ENCODE measurements at regions of chr4 and their contacts with region 1.

Region 1: GRCh38 chr4:71009890-71010588 is 16.6 kb downstream of the DCK start:
- DNase-seq: peak; percentile 66
- ATAC-seq: peak; percentile 67
- H3K4me3 ChIP-seq: no peak overlapping the region
- H3K27ac ChIP-seq: no peak overlapping the region
- H3K4me1 ChIP-seq: 0 out of 2 replicates have a peak, but pooled peaks cover 5% of the 10 kb centered on the region
- H3K27me3 ChIP-seq: no peaks in the 10 kb centered on the region
- CTCF ChIP-seq: peak; percentile 94

Region 2: DNA sequence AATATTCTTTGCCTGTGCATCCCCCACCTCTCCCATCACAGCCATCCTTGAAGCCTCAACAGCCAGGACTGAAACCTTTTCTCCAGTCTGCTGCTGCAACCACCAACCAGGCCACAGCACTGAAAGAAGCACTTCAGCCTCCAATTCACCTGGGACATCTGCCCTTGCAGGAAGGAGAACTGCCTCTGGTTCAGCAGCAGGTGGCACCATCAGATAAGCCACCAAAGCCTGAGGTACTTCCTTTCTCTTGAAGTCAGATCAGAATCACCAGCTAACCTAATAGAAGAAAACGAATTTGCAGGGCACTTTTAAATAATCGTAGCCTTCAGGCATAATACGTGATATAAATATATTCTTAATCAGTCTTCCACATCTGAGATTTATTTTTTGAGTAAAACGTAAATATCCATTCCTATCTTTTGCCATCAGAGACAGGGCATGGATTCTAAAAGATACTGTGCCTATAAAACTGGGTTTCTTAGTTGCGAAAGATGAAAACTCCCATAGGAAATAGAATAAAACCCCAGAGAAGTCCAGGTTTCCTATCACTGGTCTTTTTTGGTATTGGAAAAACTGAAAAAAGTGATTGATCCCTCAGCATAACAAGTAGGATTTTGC is 408.5 kb before region 1 on chr4:
- CTCF ChIA-PET with region 1: interaction called, 3 read pairs
- POLR2A ChIA-PET with region 1: no interaction called
- intact Hi-C with region 1: loop called (anchors 1 kb)
- DNase-seq: peak; percentile 83
- ATAC-seq: peak; percentile 98
- H3K4me3 ChIP-seq: no peak overlapping the region
- H3K27ac ChIP-seq: no peak overlapping the region
- H3K4me1 ChIP-seq: no peaks in the 10 kb centered on the region
- H3K27me3 ChIP-seq: no peaks in the 10 kb centered on the region
- CTCF ChIP-seq: peak; percentile 93

Region 3: DNA sequence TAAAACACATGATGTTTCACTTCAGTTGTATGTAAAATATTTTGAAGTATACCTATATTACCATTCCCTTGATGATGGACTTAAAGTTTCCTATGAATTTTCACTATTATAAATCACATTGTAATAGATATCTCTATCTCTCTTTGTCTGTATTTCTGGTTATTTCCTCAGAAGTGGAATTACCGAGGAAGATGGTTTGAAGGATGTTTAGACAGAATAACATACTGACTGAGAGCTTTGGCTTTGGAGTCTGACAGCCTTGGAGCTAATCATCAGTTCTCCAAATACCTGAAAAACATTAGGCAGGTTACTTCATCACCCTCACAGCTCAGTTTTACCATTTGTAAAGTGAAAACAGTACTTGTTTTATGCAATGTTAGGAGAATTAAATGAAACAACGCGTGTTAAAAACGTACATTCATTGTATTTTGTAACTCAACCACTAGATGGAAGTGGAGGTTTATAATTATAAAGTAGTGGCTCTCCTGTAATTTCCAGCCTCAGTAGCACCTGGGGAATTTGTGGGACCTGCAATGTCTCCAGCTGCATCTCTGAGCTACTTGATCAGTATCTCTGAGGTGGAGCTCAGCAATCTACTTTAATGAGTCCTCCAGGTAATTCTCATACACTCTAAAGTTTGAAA is 358.1 kb before region 1 on chr4:
- CTCF ChIA-PET with region 1: interaction called, 6 read pairs
- POLR2A ChIA-PET with region 1: no interaction called
- intact Hi-C with region 1: loop called (anchors 1 kb)
- DNase-seq: peak; percentile 77
- ATAC-seq: peak; percentile 74
- H3K4me3 ChIP-seq: peak overlapping the region; percentile 48; the same call in 1 of the 2 replicates
- H3K27ac ChIP-seq: no peak overlapping the region
- H3K4me1 ChIP-seq: no peaks in the 10 kb centered on the region
- H3K27me3 ChIP-seq: no peaks in the 10 kb centered on the region
- CTCF ChIP-seq: peak; percentile 85

Region 4: DNA sequence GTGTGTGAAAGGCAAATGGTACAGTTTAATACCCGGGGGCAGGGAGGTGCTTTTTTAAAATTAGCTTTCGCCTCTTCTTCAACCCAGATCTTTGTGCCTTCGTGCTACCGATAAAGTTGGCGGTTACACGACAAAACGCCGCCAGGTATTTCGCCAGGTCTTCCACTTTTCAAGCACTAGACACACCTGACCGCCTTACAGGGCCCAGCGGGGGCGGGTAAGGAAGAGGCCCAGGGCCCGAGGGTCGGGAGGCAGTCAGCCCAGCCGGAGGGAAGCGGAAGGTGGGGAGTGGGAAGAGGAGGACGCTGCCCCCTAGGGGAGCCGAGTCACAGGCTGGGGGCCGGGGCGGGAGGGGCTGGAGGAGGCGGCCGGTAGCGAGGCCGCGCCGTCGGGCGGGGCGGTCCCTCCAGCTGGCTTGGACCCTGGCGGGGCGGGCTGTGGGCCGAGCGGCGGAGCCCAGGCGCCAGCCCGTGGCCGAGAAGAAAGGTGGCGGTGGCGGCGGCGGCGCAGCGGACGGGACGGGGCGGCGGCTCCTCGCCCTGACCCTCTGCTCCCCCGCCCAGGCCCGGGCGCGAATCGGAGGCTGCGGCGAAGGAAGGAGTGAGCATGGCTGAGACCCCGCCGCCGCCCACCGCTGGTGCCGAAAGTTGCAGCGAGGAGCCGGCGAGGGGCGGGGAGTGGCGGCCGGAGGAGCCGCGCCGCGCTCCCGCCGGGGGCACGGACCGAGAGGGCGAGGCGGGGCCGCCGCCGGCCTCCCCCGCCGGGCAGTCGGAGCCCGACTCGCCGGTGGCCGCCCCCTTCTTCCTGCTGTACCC is 305.5 kb before region 1 on chr4:
- CTCF ChIA-PET with region 1: no interaction called
- POLR2A ChIA-PET with region 1: no interaction called
- intact Hi-C with region 1: no loop called
- DNase-seq: peak; percentile 81
- ATAC-seq: peak; percentile 50
- H3K4me3 ChIP-seq: peak overlapping the region; percentile 83
- H3K27ac ChIP-seq: peak overlapping the region; percentile 78
- H3K4me1 ChIP-seq: peaks cover 26% of the 10 kb centered on the region
- H3K27me3 ChIP-seq: no peaks in the 10 kb centered on the region
- CTCF ChIP-seq: peak; percentile 52

Region 5: GRCh38 chr4:70901984-70902576 is 108.0 kb before region 1 on chr4 and contains the start of gene MOB1B:
- CTCF ChIA-PET with region 1: interaction called, 8 read pairs
- POLR2A ChIA-PET with region 1: interaction called, 10 read pairs
- intact Hi-C with region 1: no loop called
- DNase-seq: peak; percentile 87
- ATAC-seq: peak; percentile 89
- H3K4me3 ChIP-seq: peak within 1 kb of the TSS; percentile 87
- H3K27ac ChIP-seq: no peak within 1 kb of the TSS
- H3K4me1 ChIP-seq: peaks cover 11% of the 10 kb centered on the region
- H3K27me3 ChIP-seq: no peaks in the 10 kb centered on the region
- CTCF ChIP-seq: no peak
- total RNA-seq, gene MOB1B: 11.4 and 12.6 TPM in 2 replicates

Region 6: GRCh38 chr4:70943114-70943513 is 66.9 kb before region 1 on chr4:
- CTCF ChIA-PET with region 1: no interaction called
- POLR2A ChIA-PET with region 1: no interaction called
- intact Hi-C with region 1: no loop called
- DNase-seq: no peak
- ATAC-seq: no peak
- H3K4me3 ChIP-seq: no peak overlapping the region
- H3K27ac ChIP-seq: no peak overlapping the region
- H3K4me1 ChIP-seq: no peaks in the 10 kb centered on the region; the same call in 1 of the 2 replicates
- H3K27me3 ChIP-seq: no peaks in the 10 kb centered on the region
- CTCF ChIP-seq: no peak

Region 7: GRCh38 chr4:70984589-70984988 is 25.4 kb before region 1 on chr4:
- CTCF ChIA-PET with region 1: interaction called, 10 read pairs
- POLR2A ChIA-PET with region 1: no interaction called
- intact Hi-C with region 1: no loop called
- DNase-seq: no peak
- ATAC-seq: no peak
- H3K4me3 ChIP-seq: no peak overlapping the region
- H3K27ac ChIP-seq: no peak overlapping the region
- H3K4me1 ChIP-seq: no peaks in the 10 kb centered on the region
- H3K27me3 ChIP-seq: no peaks in the 10 kb centered on the region
- CTCF ChIP-seq: no peak

Region 8: DNA sequence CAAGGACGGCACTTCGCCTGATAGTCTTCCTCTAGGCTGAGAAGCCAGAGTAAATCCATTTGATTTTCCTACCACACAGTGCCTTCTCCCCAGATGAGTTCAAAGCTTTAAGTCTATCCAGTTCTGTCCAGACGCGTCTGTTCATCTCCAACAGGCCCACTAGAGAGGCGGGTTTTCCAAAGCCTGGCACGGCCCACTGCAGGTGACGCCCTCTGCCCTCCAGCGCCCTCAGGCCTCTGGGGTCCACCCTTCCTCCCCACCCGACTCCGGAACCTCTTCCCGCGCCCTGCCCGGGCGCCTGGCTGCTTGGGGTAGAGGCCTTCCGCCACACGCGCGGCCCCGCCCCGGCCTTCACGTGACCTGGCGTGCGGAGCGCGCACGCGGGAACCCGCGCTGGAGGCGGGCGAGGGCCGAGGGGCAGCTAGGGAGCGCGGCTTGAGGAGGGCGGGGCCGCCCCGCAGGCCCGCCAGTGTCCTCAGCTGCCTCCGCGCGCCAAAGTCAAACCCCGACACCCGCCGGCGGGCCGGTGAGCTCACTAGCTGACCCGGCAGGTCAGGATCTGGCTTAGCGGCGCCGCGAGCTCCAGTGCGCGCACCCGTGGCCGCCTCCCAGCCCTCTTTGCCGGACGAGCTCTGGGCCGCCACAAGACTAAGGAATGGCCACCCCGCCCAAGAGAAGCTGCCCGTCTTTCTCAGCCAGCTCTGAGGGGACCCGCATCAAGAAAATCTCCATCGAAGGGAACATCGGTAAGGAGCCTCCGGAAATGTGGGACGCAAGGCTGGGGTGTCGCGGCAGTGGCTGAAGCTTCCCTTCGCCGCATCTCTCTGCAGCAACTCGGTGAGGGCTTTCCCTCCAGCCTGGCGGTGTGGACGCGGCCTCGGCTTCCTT is 16.6 kb before region 1 on chr4 and contains the start of gene DCK:
- CTCF ChIA-PET with region 1: interaction called, 13 read pairs
- POLR2A ChIA-PET with region 1: no interaction called
- intact Hi-C with region 1: no loop called
- DNase-seq: peak; percentile 95
- ATAC-seq: peak; percentile 87
- H3K4me3 ChIP-seq: peak within 1 kb of the TSS; percentile 75
- H3K27ac ChIP-seq: peak within 1 kb of the TSS; percentile 29
- H3K4me1 ChIP-seq: peaks cover 31% of the 10 kb centered on the region
- H3K27me3 ChIP-seq: no peaks in the 10 kb centered on the region
- CTCF ChIP-seq: no peak
- total RNA-seq, gene DCK: 19.5 and 21.0 TPM in 2 replicates

Region 9: DNA sequence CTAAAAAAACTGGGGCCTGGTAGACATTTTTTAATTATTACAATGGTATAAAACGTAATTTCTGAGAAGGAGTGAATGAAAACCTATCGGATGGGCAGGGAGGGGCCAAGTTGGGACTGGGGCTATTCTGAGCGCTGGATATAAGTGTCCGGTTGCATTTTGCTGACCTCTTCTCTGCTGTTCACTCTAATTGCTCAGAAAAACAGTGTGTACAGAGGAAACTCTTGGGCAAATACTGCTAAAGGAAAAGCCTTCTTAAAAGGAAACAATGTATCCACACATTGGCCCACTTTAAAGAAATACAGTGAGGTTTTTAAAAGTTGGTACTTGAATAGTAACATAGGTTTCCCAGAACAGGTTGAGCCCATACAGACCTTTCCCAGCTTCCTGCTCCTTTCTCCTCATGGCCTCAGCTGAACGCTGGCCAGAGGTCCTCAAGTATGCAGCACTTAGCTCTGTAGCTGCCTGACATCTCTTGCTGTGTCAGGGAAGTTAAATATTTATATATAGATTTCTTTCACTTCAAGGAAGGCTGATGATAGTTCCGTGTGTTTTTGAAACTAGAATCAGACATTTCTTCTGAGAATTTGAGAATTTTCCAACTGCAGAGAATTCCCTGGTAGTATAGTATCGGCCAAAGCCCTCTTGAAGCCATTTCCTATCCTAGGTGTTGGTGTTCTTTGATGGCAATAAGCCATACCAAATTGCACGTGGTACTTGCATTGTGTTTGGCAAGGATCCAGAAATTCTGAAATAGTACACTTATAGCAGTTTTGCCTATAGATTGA is 231.7 kb after region 1 on chr4:
- CTCF ChIA-PET with region 1: no interaction called
- POLR2A ChIA-PET with region 1: no interaction called
- intact Hi-C with region 1: no loop called
- DNase-seq: no peak
- ATAC-seq: no peak
- H3K4me3 ChIP-seq: no peak overlapping the region
- H3K27ac ChIP-seq: no peak overlapping the region
- H3K4me1 ChIP-seq: peaks cover 10% of the 10 kb centered on the region
- H3K27me3 ChIP-seq: no peaks in the 10 kb centered on the region
- CTCF ChIP-seq: no peak

Region 10: DNA sequence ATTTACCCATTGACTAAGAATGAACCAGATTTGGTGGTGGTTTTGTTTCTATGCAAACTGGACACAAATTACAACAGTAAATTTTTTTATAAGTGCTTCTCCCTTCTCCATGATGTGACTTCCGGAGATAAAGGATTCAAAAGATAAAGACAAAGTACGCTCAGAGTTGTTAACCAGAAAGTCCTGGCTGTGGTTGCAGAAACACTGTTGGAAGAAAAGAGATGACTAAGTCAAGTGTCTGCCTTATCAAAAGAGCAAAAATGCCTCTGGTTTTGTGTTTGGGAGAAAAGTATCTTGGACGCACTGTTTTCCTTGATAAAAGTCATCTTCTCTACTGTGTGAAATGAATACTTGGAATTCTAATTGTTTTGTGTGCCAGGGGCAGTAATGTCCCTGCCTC is 560.5 kb after region 1 on chr4:
- CTCF ChIA-PET with region 1: no interaction called
- POLR2A ChIA-PET with region 1: no interaction called
- intact Hi-C with region 1: no loop called
- DNase-seq: no peak
- ATAC-seq: no peak
- H3K4me3 ChIP-seq: no peak overlapping the region
- H3K27ac ChIP-seq: no peak overlapping the region
- H3K4me1 ChIP-seq: no peaks in the 10 kb centered on the region
- H3K27me3 ChIP-seq: no peaks in the 10 kb centered on the region
- CTCF ChIP-seq: no peak